ENCODE measurements at regions of chr5 and their contacts with region 1.

Region 1: DNA sequence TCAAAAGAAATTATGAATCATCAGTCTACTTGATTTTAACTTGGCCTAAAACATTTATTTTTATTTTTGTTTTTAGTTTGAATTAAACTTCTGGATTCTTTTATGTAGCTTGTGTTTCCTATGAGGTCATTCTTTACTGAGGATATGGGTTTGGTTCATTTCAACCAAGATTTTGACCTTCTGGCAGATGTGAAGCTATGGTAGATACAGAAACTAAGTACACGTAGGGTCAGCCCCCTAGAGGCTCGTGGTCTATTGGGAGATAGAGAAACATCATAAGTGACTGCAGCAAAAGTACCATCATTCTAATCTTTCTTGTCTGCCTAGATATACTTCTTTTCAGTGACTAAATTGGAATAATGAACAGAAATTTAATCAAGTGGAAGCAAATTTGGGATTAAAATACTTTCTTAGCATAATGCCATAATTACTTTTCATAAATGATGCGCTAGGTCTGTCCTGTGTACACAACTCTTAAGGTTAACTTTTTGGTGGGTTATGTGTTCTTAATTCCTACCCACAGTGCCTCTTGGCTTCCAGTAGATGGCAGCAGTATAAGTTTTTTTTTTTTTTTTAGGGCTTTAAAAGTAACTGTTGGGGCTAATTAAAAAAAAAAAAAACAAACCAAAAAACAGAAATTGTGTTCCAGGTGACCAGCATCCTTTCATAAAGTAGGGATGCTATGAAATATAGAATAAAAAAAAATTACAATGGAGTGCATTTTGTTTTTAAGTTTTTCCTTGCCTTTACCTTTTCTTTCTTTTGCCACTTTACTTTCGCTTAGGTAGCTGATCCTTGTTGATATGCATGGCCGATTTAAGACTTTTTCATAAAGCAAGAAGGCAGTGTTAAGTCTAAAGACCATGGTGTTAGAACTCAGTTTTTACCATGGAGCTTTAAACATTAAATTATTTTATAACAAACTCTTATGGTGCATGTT is 49.9 kb downstream of the LRRTM2 start:
- DNase-seq: peak; percentile 61
- H3K4me3 ChIP-seq: no peak overlapping the region
- H3K27ac ChIP-seq: peak overlapping the region; percentile 39 to 52; a peak in 3 of 4 replicates
- H3K4me1 ChIP-seq: no peaks in the 10 kb centered on the region; a peak in 2 of 4 replicates
- H3K27me3 ChIP-seq: no peaks in the 10 kb centered on the region
- CTCF ChIP-seq: peak; percentile 69
- EP300 ChIP-seq: no peak
- RAD21 ChIP-seq: peak; percentile 59; the same call in 1 of the 2 replicates

Region 2: GRCh38 chr5:138809391-138809790 is 15.8 kb before region 1 on chr5:
- CTCF ChIA-PET with region 1: interaction called, 14 read pairs
- POLR2A ChIA-PET with region 1: no interaction called
- DNase-seq: no peak
- H3K4me3 ChIP-seq: no peak overlapping the region
- H3K27ac ChIP-seq: no peak overlapping the region
- H3K4me1 ChIP-seq: peaks cover 0 to 10% of the 10 kb centered on the region in 2 experiments; a peak in 1 of 4 replicates
- H3K27me3 ChIP-seq: no peaks in the 10 kb centered on the region
- CTCF ChIP-seq: no peak
- EP300 ChIP-seq: no peak
- RAD21 ChIP-seq: no peak

Region 3: GRCh38 chr5:138874771-138875551 is 49.8 kb after region 1 on chr5 and contains the start of gene LRRTM2:
- CTCF ChIA-PET with region 1: interaction called, 12 read pairs
- POLR2A ChIA-PET with region 1: no interaction called
- DNase-seq: peak; percentile 63
- H3K4me3 ChIP-seq: peak within 1 kb of the TSS; percentile 53 to 61
- H3K27ac ChIP-seq: peak within 1 kb of the TSS; percentile 78 to 92
- H3K4me1 ChIP-seq: peaks cover 43 to 48% of the 10 kb centered on the region in 2 experiments
- H3K27me3 ChIP-seq: no peaks in the 10 kb centered on the region
- CTCF ChIP-seq: no peak
- EP300 ChIP-seq: no peak
- RAD21 ChIP-seq: no peak
- polyA plus RNA-seq, gene LRRTM2: 0.38 and 0.68 TPM in 2 replicates